RWPE1 (cell line): ENCODE measurements at regions of chr1 and their contacts with region 1.

Region 1: DNA sequence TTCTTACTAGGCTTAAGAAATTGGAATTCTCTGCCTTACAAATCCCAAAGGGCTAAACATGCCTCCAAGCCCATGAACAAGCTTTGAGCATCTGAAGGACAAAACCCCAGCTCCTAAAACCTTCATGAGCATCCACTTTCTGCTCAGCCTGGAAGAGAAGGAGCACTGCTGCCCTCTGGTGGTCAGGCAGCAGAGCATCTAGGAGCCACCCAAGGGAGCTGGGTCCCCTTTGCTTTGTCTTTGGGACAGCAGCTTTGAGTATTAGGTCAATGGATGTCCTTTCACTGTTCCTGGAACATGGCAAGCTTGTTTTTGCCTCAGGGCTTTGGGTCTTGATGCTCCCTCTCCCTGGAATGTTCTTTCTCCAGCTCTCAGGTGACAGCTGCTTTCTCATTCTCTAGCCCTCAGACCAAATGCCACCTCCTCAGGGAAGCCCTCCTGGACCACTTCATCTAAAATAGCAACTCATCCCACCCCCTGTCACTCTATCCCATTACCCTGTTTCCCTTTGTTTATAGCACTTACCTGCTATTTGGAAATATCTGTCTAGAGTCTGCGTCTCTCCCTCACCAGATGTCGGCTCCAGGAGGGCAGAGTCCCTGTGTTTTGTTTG is 25.7 kb downstream of the RAB7B start:
- DNase-seq: peak; percentile 73
- H3K27ac ChIP-seq: peak overlapping the region; percentile 76
- CTCF ChIP-seq: peak; percentile 94

Region 2: GRCh38 chr1:205791568-205792180 is 185.8 kb before region 1 on chr1:
- CTCF ChIA-PET with region 1: interaction called, 107 read pairs
- POLR2A ChIA-PET with region 1: no interaction called
- DNase-seq: peak; percentile 88
- H3K27ac ChIP-seq: no peak overlapping the region
- CTCF ChIP-seq: peak; percentile 75

Region 3: GRCh38 chr1:205919026-205919746 is 58.3 kb before region 1 on chr1:
- CTCF ChIA-PET with region 1: interaction called, 406 read pairs
- POLR2A ChIA-PET with region 1: interaction called, 3 read pairs
- DNase-seq: peak; percentile 87
- H3K27ac ChIP-seq: no peak overlapping the region
- CTCF ChIP-seq: peak; percentile 89

Region 4: GRCh38 chr1:205939690-205940330 is 37.7 kb before region 1 on chr1:
- CTCF ChIA-PET with region 1: interaction called, 45 read pairs
- POLR2A ChIA-PET with region 1: no interaction called
- DNase-seq: peak; percentile 84
- H3K27ac ChIP-seq: no peak overlapping the region
- CTCF ChIP-seq: no peak

Region 5: DNA sequence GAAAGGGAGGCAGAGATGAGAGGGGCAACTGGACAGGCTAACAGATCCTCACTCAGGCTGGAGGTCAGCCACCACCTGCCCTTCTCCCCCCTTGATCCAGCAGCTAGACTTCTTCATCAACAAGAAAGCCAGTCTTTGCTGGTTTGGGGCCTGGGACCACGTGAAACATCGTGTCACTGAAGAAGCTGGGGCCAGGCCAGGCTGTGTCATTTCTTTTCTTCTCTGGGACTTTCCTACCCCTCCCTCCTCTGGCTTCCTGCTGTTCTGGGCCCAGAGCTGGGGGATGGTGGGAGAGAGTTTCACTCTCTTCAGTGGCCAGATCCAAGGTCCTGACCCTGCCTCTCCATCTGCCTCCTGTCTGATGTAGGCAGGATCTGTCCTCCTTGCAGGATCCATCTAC is 16.1 kb before region 1 on chr1:
- CTCF ChIA-PET with region 1: interaction called, 22 read pairs
- POLR2A ChIA-PET with region 1: no interaction called
- DNase-seq: no peak
- H3K27ac ChIP-seq: peak overlapping the region; percentile 87
- CTCF ChIP-seq: no peak

Region 6: GRCh38 chr1:206002871-206003801 is 25.6 kb after region 1 on chr1 and contains the start of gene RAB7B:
- CTCF ChIA-PET with region 1: interaction called, 10 read pairs
- POLR2A ChIA-PET with region 1: no interaction called
- DNase-seq: peak; percentile 94
- H3K27ac ChIP-seq: peak within 1 kb of the TSS; percentile 99
- CTCF ChIP-seq: no peak

Region 7: DNA sequence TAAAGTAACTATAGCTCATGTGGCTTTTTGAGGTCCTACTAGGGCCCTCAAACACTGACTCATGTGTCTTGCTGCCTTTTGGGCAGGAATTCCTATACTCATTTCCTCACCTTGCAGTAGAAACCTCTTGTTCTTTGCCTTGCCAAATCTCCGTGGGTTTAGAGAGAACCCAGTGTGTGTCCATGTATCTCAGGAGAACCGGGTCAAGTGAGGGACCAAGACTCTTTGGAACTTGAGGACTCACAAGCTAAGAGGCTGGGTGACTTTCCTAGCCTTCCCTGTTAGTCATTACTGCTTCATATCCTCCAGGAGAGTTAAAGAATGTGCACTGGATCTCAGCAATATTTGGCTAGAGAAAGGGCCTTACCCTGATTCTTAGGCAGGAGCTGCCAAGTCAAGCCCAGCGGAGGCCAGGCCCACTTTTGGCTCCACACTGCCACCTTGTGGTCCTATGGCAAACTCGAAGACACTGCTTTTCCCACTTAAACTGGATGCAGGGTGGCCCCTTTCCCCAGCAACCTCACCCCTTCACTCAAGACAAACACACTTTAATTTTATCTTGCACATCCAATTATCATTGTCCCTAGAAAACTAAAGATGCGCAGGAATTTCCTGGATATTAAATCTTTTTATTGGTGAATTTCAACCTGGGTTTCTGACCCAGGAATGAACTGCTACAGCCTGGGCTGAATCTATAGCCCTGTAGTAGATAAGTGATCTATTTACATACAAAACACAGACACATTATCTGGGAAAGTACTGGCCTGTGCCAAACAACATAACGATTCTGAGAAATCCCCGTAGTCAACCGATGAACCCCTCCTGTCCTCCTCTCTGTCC is 129.0 kb after region 1 on chr1:
- CTCF ChIA-PET with region 1: interaction called, 37 read pairs
- POLR2A ChIA-PET with region 1: no interaction called
- DNase-seq: peak; percentile 92
- H3K27ac ChIP-seq: no peak overlapping the region
- CTCF ChIP-seq: peak; percentile 86